Left cardiac atrium (tissue), 4 donors: ENCODE measurements at regions of chr2 and their contacts with region 1.

Region 1: DNA sequence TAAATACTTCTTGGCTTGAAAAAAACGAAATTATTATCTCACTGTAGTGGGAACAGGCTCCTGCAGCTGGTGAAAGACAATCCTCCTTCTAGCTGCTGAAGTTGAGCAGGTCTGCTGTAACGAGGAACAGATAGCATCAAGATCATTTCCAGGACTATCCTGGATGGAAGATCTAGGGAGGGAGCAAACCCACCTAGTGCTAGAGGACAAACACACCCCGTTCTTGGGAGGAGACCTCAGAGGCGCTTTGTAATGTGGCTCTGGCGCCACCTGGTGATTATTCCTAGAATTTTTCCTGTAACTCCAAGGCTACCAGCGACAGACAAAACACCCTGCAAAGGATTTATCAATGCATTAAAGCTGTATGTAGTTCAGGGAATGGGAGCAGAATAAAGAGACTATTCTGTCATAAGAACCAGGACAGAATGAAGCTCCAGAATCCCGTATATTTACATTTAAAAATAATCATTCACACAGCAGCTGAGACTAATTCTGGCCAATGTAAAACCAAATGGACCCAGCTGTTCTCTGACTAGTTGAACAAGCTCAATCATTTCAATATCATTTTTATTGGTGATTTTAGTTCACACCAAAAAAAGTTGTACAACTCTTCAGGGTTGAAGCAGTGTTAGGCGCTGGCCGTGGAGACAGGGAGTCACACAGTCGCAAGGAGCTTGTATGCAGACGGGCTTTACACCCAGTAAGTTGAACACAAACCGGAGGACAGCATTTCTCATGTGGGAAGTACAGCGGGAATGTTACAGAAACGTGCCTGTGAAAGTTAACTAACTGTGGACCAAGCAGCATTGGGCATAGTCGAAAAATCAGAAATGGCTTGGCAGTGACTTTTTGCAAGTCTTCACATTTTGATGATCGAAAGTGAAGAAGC is 290.3 kb downstream of the TRIB2 start:
- DNase-seq: peak; percentile 51
- ATAC-seq: peak; percentile 92 to 94

Region 2: DNA sequence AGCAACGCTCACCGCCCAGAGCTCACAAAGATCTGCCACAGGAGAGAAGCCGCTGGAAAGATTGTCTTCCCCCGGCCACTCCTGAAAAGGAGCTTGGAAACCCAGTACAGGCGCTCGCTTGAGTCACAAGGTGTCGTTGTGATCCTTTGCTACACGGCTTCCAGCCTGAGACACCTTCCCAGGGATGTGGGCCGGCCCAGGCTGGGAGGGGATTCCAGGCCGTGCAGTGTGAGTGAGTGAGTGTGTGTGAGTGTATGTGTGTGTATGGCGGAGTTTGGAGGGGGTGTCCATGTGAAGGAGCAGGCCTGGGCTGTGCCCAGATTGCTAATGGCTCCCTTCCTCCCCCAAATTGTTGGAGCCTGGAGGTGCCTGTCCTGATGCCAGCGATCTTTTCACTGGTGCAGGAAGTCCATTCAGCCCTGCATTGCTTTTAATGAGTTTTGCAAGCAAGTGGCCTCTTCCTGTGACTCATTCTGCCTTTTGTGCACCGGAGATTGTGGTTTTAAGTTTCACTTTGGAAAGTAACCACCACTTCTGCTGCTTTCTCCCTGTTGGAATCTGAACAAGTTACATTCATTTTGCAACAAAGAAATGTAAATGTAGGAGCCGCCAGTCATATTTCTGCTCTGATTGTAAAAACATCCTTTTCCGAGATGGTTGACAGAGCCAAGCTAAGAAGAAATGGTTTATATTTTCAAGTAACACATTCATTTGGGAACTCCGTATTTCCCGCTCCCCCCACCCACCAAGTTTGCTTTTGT is 1176.9 kb before region 1 on chr2:
- intact Hi-C with region 1: loop called (anchors 2 to 10 kb)
- DNase-seq: peak; percentile 61
- ATAC-seq: peak; percentile 77 to 85

Region 3: DNA sequence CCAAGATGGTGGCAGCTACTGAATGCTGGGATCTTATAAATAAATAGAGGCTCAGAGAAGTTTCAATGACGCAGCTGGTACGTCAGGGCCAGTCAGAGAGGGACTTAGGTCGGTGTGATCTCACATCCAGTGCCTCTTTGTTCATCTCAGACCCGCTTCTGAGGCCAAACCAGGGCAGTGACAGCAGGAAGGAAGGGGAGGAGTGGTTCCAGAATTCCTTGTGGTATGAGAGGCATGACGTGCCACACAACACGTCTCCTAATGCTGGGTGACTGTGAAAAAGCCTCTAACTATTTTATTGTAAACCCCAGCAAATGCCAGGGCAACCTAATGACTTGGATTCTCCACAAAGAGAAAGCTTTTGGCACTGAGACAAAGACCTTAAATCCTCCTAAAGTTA is 837.4 kb before region 1 on chr2:
- intact Hi-C with region 1: loop called in 1 of 2 experiments (anchors 5 kb)
- DNase-seq: peak; percentile 62
- ATAC-seq: peak; percentile 58 to 79

Region 4: DNA sequence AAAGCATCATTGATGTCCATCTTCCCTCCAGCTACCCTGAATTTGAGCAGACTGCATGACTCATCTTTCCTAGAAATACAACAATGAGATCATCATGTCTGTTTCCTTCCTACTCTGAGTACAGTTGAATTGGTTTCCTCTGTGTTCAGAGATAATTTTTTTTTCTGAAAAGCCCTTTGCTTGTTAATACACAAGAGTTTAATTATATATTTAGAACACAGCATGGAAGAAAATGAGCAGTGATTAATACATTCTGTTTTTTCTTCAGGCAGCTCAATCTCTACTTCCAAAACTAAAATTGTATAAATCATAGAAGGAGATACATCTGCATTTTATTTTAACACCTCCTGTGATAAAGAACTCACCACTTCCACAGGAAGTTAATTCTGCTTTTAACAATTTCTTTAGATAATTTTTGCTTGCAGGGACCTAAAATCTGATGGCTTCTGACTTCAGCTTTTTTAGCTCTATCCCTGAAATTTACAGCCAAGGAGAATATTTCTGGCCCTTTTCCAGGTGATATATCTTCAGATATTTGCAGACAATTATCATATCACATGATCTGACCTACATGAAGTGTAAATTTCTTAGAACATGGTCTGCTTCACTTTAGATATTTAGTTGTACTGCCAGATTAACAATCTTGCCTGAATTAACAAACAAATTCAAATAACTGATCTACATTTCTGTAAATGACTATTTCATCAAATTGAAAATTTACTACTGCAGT is 41.4 kb before region 1 on chr2:
- intact Hi-C with region 1: no loop called
- DNase-seq: no peak
- ATAC-seq: peak; percentile 76 to 93